Right ventricle myocardium superior (tissue), 1 donor: ENCODE measurements at regions of chr2 and their contacts with region 1.

Region 1: GRCh38 chr2:133568172-133568571 is at the start of gene NCKAP5:
- DNase-seq: no peak
- ATAC-seq: peak; percentile 64
- total RNA-seq, gene NCKAP5: 7.9 TPM

Region 2: GRCh38 chr2:133146895-133147294 is 421.3 kb before region 1 on chr2:
- intact Hi-C with region 1: no loop called
- DNase-seq: no peak
- ATAC-seq: no peak

Region 3: GRCh38 chr2:133777607-133778006 is 209.4 kb after region 1 on chr2:
- intact Hi-C with region 1: loop called (anchors 5 kb)
- DNase-seq: no peak
- ATAC-seq: no peak

Region 4: DNA sequence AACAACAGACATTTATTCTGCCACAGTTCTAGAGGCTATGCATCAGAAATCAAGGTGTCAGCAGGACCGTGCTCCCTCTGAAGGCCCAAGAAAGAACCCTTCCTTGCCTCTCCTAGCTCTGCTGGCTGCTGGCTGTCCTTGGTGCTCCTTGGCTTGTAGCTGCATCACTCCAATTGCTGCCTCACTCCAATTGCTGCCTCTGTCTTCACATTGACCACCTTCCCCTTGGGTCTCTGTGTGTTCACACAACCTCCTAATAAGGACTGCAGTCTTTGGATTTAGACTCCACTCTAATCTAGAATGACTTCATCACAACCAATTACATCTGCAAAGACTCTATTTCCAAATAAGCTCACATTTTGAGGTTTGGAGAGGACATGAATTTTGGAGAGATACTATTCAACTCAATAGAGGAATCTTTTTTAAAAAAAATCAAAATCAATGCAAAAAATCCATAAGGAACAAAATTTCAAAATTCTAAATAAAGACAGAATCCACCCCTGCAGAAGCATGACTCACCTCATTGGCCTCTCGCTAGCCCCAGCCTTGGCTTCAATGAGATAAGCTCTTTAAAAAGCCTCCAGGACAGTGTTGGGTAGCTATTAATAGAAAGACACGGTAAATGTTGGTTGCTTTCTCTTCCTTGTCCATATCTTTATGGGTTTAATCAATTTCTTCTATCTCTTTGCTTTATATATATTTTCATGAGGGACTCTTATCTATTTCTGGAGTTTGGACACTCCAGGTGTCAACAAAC is 418.1 kb after region 1 on chr2:
- intact Hi-C with region 1: no loop called
- DNase-seq: no peak
- ATAC-seq: peak; percentile 89